SK-N-SH (cell line): ENCODE measurements at regions of chr20 and their contacts with region 1.

Region 1: DNA sequence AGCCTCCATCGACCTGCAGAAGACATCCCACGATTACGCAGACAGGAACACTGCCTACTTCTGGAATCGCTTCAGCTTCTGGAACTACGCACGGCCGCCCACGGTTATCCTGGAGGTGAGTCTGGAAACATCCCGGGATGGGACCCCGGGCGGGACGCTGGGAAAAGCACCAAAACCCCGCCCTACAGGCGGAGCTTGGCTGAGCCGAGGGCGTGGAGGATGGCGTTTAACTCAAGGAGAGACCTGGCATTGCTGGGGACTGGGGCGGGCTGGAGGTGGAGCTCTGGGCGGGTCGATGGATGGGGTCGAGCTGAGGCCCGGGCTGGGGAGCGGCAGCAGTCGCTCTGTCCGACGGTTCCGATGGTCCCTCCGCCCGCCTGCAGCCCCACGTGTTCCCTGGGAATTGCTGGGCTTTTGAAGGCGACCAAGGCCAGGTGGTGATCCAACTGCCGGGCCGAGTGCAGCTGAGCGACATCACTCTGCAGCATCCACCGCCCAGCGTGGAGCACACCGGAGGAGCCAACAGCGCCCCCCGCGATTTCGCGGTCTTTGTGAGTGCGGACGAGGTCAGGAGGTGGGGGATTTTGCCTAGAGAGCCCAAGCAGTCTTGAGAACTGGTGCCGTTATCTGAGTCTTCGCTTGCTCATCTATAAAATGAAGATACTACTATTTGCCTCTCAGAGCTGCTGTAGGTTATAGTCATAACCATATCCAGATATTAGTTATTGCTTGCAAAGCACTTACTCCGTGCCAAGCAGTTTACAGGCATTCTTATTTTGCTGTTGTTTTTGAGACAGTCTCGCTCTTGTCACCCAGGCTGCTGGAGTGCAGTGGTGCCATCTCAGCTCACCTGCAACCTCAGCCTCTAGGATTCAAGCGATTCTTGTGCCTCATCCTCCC is 3.8 kb downstream of the SPAG4 start:
- DNase-seq: peak; percentile 90
- H3K4me3 ChIP-seq: peak overlapping the region; percentile 48 to 83
- H3K27ac ChIP-seq: peak overlapping the region; percentile 31 to 50; a peak in 3 of 4 replicates
- H3K4me1 ChIP-seq: peaks cover 8 to 11% of the 10 kb centered on the region in 2 experiments; a peak in 1 of 4 replicates
- H3K27me3 ChIP-seq: no peaks in the 10 kb centered on the region
- CTCF ChIP-seq: peak; percentile 69
- EP300 ChIP-seq: no peak
- RAD21 ChIP-seq: peak; percentile 44

Region 2: DNA sequence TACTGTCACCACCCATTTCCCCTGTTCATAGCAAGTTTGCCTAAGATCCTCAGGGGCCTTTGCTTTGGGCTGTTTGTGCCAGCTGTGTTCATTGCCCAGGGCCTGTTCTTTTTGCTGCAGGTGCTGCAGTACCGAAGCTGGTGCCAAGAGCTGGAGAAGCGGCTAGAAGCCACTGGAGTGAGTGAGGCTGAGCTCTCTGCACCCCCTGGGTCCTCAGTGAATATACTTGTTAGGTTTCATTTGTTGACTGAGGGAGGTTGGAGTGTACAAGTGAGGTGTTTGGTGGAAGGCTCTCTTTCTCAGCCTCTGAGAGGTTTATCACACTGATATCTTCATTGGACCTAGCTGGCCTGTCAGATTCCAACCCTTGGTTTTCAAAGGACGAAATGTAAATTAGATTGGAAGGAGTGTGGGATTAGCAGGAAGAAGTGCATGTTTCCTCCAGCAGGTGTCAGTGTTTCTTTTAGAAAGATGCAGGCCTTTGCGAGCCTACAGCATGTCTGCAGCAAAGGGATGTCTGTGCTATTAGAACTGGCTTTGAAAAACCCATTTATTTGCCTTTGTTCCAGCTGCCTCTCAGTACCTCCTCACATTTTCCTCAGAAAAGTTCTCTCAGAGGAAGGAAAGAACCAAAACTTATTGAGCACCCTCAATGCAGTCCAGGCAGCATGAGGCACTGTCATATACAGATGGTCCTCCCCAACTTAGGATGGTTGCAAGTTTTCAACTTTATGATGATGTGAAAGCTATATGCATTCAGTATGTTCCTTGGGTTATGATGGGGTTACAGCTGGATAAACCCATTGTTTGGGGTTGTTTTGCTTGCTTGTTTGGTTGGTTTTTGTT is 155.8 kb before region 1 on chr20:
- CTCF ChIA-PET with region 1: interaction called, 11 read pairs
- POLR2A ChIA-PET with region 1: interaction called, 3 read pairs
- DNase-seq: peak; percentile 65
- H3K4me3 ChIP-seq: no peak overlapping the region; a peak in 1 of 4 replicates
- H3K27ac ChIP-seq: no peak overlapping the region
- H3K4me1 ChIP-seq: peaks cover 0 to under 1% of the 10 kb centered on the region in 2 experiments; a peak in 3 of 4 replicates
- H3K27me3 ChIP-seq: no peaks in the 10 kb centered on the region
- CTCF ChIP-seq: peak; percentile 82
- EP300 ChIP-seq: no peak
- RAD21 ChIP-seq: peak; percentile 81

Region 3: GRCh38 chr20:35629427-35630145 is 10.1 kb after region 1 on chr20:
- CTCF ChIA-PET with region 1: interaction called, 42 read pairs
- POLR2A ChIA-PET with region 1: interaction called, 4 read pairs
- DNase-seq: no peak
- H3K4me3 ChIP-seq: no peak overlapping the region
- H3K27ac ChIP-seq: no peak overlapping the region
- H3K4me1 ChIP-seq: no peaks in the 10 kb centered on the region
- H3K27me3 ChIP-seq: no peaks in the 10 kb centered on the region
- CTCF ChIP-seq: no peak
- EP300 ChIP-seq: no peak
- RAD21 ChIP-seq: no peak

Region 4: DNA sequence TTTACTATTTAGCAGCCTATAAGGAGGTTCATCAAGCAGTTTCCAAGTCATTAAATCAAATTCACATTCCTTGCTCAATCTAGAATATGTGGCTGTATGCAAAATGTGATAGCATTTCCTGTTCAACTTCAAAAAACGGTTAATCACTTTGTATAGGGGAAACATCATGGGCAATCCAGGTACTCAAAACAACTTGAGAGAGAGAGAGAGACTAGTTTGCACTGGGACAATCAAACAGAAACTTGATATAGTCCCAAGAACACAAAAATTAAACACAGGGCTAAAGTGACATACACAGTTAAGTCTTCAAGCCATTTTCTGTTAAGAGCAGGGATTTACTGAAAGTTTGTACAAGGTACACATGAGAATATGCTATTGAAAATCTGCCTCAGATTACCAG is 37.8 kb after region 1 on chr20:
- CTCF ChIA-PET with region 1: interaction called, 28 read pairs
- POLR2A ChIA-PET with region 1: interaction called, 3 read pairs
- DNase-seq: no peak
- H3K4me3 ChIP-seq: no peak overlapping the region
- H3K27ac ChIP-seq: no peak overlapping the region
- H3K4me1 ChIP-seq: peaks cover 9 to 13% of the 10 kb centered on the region in 2 experiments; a peak in 3 of 4 replicates
- H3K27me3 ChIP-seq: no peaks in the 10 kb centered on the region
- CTCF ChIP-seq: no peak
- EP300 ChIP-seq: no peak
- RAD21 ChIP-seq: no peak

Region 5: GRCh38 chr20:35699127-35699975 is 79.9 kb after region 1 on chr20 and contains the starts of genes NFS1 and ROMO1:
- CTCF ChIA-PET with region 1: interaction called, 11 read pairs
- POLR2A ChIA-PET with region 1: interaction called, 5 read pairs
- DNase-seq: peak; percentile 97
- H3K4me3 ChIP-seq: peak within 1 kb of the TSS; percentile 82 to 90
- H3K27ac ChIP-seq: peak within 1 kb of the TSS; percentile 88 to 89
- H3K4me1 ChIP-seq: peaks cover 0 to 16% of the 10 kb centered on the region in 2 experiments; a peak in 3 of 4 replicates
- H3K27me3 ChIP-seq: no peaks in the 10 kb centered on the region
- CTCF ChIP-seq: peak; percentile 23
- EP300 ChIP-seq: 0 out of 4 replicates have a peak, but pooled peaks of 1 of the 2 experiments have one; percentile 13
- RAD21 ChIP-seq: peak; percentile 11; the same call in 1 of the 2 replicates
- polyA plus RNA-seq, gene NFS1: 75.6 and 89.7 TPM in 2 replicates
- polyA plus RNA-seq, gene ROMO1: 1,087 and 1,273 TPM in 2 replicates